Activated CD4-positive, alpha-beta memory T cell treated with anti-CD3 and anti-CD28 coated beads for 36 hours (primary cell): ENCODE measurements at regions of chr1 and their contacts with region 1.

Region 1: GRCh38 chr1:235075188-235075926 is 53.3 kb downstream of the TOMM20 start:
- DNase-seq: peak; percentile 95
- H3K4me3 Mint-ChIP-seq: peak overlapping the region; percentile 74
- H3K27ac Mint-ChIP-seq: peak overlapping the region; percentile 99
- H3K4me1 Mint-ChIP-seq: peaks cover 32% of the 10 kb centered on the region
- H3K27me3 Mint-ChIP-seq: no peaks in the 10 kb centered on the region

Region 2: DNA sequence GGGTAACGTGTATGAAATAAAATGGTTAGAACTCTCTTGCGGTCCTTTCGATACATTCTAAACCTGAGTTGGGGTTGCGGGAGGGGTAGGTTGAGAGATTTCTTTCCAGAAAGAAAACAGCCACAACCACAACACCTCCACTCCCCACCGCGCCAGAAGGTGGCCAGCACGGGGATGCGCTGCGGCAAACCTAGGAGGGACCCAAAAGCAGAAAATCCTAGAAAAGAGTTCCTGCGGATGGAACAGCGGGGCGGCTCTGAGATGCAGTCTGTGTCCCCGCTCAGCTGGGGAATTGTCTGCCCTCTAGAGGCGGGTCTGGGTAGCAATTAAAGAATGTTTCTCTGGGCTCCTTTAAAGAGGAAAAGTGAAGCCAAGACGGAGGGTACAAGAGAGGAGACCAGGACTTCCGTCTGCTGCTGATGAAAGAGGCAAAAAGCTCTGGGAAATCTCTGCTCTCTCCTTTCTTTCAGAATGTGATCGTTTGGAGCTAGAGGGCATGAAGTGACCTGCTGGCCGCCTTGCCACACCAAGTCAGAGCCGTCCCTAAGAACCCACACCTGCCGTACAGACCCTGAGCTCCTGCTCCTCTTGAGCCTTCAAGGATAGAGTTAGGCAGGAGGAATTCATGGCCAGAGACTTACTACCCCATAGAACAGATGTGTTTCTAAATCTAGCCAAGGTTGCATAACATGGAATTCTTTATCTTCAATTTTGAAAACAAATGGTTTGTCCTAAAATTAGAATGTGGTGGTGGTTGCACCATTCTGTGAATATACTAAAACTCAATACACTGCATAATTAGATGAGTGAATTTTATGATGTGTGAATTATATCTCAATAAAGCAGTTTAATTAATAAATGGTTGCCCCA is 748.6 kb before region 1 on chr1:
- CTCF ChIA-PET with region 1: no interaction called
- POLR2A ChIA-PET with region 1: no interaction called
- intact Hi-C with region 1: loop called (anchors 10 kb)
- DNase-seq: peak; percentile 75
- H3K4me3 Mint-ChIP-seq: peak overlapping the region; percentile 72
- H3K27ac Mint-ChIP-seq: no peak overlapping the region
- H3K4me1 Mint-ChIP-seq: peaks cover 16% of the 10 kb centered on the region
- H3K27me3 Mint-ChIP-seq: peaks cover 13% of the 10 kb centered on the region

Region 3: DNA sequence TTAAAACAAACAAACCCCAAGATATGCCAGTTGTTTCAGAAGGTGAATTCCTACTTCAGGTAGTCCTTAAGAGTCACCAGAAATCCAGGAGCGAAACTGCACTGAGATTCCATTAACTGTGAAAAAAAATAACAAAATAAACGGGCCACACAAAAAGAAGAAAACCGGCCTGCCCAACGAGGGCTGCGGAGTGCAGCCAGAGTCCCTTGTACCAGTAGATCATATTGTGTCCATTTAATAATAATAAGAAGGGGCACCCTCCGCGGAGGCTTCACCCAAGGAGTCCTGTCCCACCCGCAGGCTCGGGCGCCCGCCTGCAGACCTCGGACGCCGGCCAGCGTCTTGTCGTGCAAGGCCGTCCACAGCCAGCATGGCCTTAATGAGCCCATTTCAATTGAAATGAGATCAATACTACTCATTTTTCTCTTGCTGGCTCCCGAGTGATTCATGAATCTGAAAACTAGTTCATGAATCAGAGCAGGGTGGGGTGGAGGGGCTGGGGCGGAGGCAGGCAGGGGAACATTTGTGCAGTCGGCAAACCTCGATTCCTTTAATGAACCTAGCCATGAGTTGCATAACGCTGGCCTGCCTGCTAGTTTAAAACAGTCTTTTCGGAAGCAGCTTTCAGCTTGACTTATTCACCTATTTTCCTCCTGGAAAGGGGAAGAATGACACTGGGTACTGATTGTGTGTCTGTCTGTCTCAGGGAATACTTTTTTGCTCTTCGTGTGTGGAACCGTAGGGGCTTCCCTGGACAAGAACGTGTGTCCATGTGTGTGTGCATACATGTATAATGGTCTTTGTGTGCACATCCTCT is 352.2 kb before region 1 on chr1:
- CTCF ChIA-PET with region 1: interaction called, 3 read pairs
- POLR2A ChIA-PET with region 1: interaction called, 5 read pairs
- intact Hi-C with region 1: loop called (anchors 1 kb)
- DNase-seq: peak; percentile 91
- H3K4me3 Mint-ChIP-seq: peak overlapping the region; percentile 60
- H3K27ac Mint-ChIP-seq: peak overlapping the region; percentile 96
- H3K4me1 Mint-ChIP-seq: peaks cover 66% of the 10 kb centered on the region
- H3K27me3 Mint-ChIP-seq: no peaks in the 10 kb centered on the region

Region 4: GRCh38 chr1:234772345-234773147 is 302.8 kb before region 1 on chr1:
- CTCF ChIA-PET with region 1: no interaction called
- POLR2A ChIA-PET with region 1: interaction called, 5 read pairs
- intact Hi-C with region 1: loop called (anchors 1 kb)
- DNase-seq: peak; percentile 95
- H3K4me3 Mint-ChIP-seq: peak overlapping the region; percentile 49
- H3K27ac Mint-ChIP-seq: peak overlapping the region; percentile 84
- H3K4me1 Mint-ChIP-seq: peaks cover 54% of the 10 kb centered on the region
- H3K27me3 Mint-ChIP-seq: no peaks in the 10 kb centered on the region

Region 5: GRCh38 chr1:234925440-234926263 is 149.7 kb before region 1 on chr1:
- CTCF ChIA-PET with region 1: no interaction called
- POLR2A ChIA-PET with region 1: interaction called, 11 read pairs
- intact Hi-C with region 1: loop called (anchors 1 kb)
- DNase-seq: peak; percentile 46
- H3K4me3 Mint-ChIP-seq: peak overlapping the region; percentile 66
- H3K27ac Mint-ChIP-seq: peak overlapping the region; percentile 98
- H3K4me1 Mint-ChIP-seq: peaks cover 54% of the 10 kb centered on the region
- H3K27me3 Mint-ChIP-seq: no peaks in the 10 kb centered on the region

Region 6: DNA sequence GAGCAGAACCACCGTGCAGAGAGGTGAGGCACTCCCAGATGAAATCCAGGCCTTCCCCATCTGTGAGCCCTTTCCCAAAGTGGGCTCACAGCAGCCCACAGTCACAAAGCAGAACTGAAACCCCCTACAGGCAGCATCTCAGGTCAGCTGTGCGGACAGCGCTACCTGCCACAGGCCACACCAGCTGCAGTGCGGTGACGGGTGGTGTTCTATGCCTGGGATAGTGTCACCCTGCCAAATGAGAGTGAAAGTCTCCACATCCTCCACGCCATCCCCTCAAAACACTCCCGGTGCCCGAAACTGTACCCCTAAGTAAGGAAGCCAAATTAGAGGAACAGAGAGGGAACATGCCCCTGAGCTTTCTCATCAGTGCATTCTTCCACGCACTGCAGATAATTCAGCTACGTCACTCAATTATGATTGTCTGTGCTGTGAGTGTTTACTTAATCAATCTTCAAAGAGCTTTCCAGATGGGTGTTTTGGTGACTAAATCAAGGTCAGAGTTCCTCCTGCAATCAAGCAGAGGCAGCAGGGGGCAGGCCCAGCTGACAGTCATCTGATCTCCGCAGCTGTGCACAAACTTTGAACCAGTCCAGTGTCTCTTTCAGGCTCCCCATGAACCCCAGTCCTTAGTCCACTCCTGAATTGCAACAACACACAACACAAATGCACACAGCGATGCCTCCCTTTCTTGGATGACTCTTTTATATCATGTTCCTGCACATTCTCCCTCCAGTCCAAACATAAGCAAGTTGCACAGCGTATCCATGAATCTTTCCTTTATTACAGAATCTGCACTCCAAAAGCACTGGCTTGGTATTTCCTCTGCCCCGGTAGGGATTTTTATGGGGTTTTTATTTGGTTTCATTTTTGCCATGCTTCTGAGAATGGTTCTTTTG is 96.7 kb before region 1 on chr1:
- CTCF ChIA-PET with region 1: interaction called, 4 read pairs
- POLR2A ChIA-PET with region 1: interaction called, 15 read pairs
- intact Hi-C with region 1: loop called (anchors 2 kb)
- DNase-seq: peak; percentile 86
- H3K4me3 Mint-ChIP-seq: peak overlapping the region; percentile 90
- H3K27ac Mint-ChIP-seq: peak overlapping the region; percentile 97
- H3K4me1 Mint-ChIP-seq: peaks cover 80% of the 10 kb centered on the region
- H3K27me3 Mint-ChIP-seq: no peaks in the 10 kb centered on the region

Region 7: DNA sequence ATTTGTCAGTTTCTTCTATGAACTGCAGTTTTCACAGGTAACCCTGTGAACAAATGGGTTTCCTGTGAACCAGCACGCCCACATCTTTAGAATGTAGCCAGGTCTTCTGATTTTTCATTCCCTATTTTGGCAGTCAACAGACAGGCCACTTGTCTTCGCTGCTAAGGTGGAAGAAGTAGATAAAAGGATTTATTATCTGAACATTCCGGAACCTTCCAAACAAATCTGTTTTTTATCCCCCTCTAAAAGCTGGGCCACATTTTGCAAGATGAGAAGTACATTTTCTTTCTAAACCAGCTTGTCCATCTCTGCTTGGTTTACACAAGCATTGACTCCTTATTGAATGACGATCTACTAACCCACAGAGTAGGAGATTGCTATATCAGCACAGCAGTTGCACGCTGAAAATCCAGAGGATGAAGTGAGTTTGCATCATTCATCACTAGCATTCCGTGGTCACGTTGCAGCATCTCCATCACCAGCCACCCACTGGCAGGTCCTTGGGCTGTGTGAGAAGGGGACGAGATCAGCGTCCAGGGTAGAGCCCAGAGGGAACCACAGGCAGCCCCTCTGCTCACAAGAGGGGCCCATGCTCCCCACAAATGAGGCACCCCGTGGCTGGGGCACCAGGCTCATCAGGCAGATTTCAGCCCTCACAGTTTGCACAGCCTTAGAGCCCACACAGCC is 30.2 kb before region 1 on chr1:
- CTCF ChIA-PET with region 1: no interaction called
- POLR2A ChIA-PET with region 1: interaction called, 5 read pairs
- intact Hi-C with region 1: loop called (anchors 1 kb)
- DNase-seq: peak; percentile 70
- H3K4me3 Mint-ChIP-seq: no peak overlapping the region
- H3K27ac Mint-ChIP-seq: peak overlapping the region; percentile 91
- H3K4me1 Mint-ChIP-seq: peaks cover 59% of the 10 kb centered on the region
- H3K27me3 Mint-ChIP-seq: no peaks in the 10 kb centered on the region

Region 8: DNA sequence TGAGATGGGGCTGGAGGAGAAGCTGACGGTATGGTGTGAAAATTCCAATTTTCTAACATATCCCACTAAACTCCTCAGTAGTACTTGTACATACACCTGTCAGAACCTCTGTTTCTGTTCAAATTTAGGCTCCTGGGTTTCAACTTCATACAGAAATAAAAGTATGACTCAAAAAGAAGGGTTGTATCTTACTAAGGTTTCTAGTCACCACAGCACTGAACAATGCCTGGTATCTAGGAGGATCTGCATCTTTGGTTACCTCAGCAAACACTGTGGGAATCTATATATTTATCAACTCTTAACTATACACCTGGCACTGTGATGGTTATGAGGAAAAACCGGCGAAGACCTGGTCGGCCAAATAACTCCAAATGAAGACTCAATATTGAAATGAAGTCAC is 71.9 kb after region 1 on chr1:
- CTCF ChIA-PET with region 1: no interaction called
- POLR2A ChIA-PET with region 1: no interaction called
- intact Hi-C with region 1: no loop called
- DNase-seq: no peak
- H3K4me3 Mint-ChIP-seq: no peak overlapping the region
- H3K27ac Mint-ChIP-seq: peak overlapping the region; percentile 14
- H3K4me1 Mint-ChIP-seq: peaks cover 21% of the 10 kb centered on the region
- H3K27me3 Mint-ChIP-seq: no peaks in the 10 kb centered on the region